ENCODE measurements at regions of chr16 and their contacts with region 1.

Region 1: GRCh38 chr16:72099377-72099818 is 5.8 kb downstream of the DHX38 start:
- DNase-seq: peak; percentile 81
- ATAC-seq: peak; percentile 94
- H3K4me3 ChIP-seq: no peak overlapping the region
- H3K27ac ChIP-seq: no peak overlapping the region
- H3K4me1 ChIP-seq: peaks cover 23% of the 10 kb centered on the region
- H3K27me3 ChIP-seq: no peaks in the 10 kb centered on the region; a peak in 1 of 5 replicates
- CTCF ChIP-seq: peak; percentile 95
- EP300 ChIP-seq: no peak
- POLR2A ChIP-seq: peak; percentile 32 to 46; a peak in 2 of 4 replicates
- RAD21 ChIP-seq: peak; percentile 98

Region 2: DNA sequence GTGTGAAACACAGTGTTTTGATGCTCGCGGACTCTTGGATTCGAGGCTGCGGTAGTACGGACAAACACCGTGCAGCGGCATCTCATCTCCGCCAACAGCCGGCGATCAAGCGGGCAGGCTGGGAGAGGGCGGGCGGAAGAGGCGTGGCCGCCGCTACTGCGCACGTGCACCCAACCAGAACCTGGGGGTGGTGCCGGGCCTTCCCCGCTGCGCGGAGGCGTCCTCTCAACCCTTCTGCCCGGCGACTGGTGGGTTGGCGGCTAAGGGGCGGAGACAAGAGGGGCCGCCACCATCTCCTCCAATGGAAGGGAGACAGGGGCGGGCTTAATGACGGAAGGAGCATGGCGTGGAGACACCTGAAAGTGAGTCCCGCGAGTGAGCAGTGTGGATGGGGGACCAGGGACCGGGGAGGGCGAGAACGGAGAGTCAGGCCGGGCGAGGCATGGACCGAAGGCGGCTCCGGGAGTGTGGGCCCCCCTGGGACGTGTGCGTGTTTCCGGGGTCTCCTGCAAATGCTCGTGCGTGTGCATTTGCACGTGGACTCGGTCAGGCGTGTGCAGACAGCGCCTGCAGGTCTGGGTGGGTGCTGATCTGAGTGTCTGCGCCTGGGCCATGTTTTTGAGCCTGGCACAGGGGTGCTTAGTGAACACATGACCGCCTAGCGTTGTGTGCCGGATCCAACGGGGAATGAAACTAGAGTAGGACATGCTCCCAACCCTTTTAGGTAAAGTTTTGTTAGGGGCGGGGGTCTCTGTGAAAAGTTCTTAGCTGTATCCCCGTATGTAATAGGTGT is 90.8 kb before region 1 on chr16 and contains the start of gene DHODH:
- CTCF ChIA-PET with region 1: no interaction called
- POLR2A ChIA-PET with region 1: no interaction called
- in situ Hi-C with region 1: no loop called
- intact Hi-C with region 1: loop called (anchors 1 kb)
- DNase-seq: peak; percentile 99
- ATAC-seq: peak; percentile 99
- H3K4me3 ChIP-seq: peak within 1 kb of the TSS; percentile 91 to 100 (median 97)
- H3K27ac ChIP-seq: peak within 1 kb of the TSS; percentile 87
- H3K4me1 ChIP-seq: peaks cover 41% of the 10 kb centered on the region
- H3K27me3 ChIP-seq: no peaks in the 10 kb centered on the region; a peak in 1 of 5 replicates
- CTCF ChIP-seq: peak; percentile 48
- EP300 ChIP-seq: no peak
- POLR2A ChIP-seq: peak; percentile 98
- RAD21 ChIP-seq: peak; percentile 42
- total RNA-seq, gene DHODH: 12.7 and 16.4 TPM in 2 replicates

Measured in HepG2 (cell line).